ENCODE measurements at regions of chr2 and their contacts with region 1.

Region 1: GRCh38 chr2:229133155-229133772 is 137.8 kb downstream of the PID1 start:
- DNase-seq: peak in 1 of 10 donors; percentile 18
- H3K4me3 ChIP-seq: no peak overlapping the region
- H3K27ac ChIP-seq: no peak overlapping the region
- H3K27me3 ChIP-seq: no peaks in the 10 kb centered on the region
- CTCF ChIP-seq: peak in 55 of 56 donors; percentile 16 to 78 (median 57)

Region 2: GRCh38 chr2:229273723-229274338 is 140.6 kb after region 1 on chr2:
- intact Hi-C with region 1: loop called (anchors 5 to 10 kb)
- DNase-seq: peak in 4 of 10 donors; percentile 25 to 59 (median 42)
- H3K4me3 ChIP-seq: peak overlapping the region; percentile 3 to 60 (median 40)
- H3K27ac ChIP-seq: peak overlapping the region in 3 of 59 donors; percentile 26 to 39 (median 33)
- H3K27me3 ChIP-seq: no peaks in the 10 kb centered on the region
- CTCF ChIP-seq: peak; percentile 55 to 90 (median 80)

Region 3: GRCh38 chr2:229422063-229422462 is 288.8 kb after region 1 on chr2:
- intact Hi-C with region 1: no loop called
- DNase-seq: no peak
- H3K4me3 ChIP-seq: peak overlapping the region in 8 of 59 donors; percentile 1 to 31 (median 8)
- H3K27ac ChIP-seq: peak overlapping the region in 14 of 59 donors; percentile 0 to 49 (median 26)
- H3K27me3 ChIP-seq: no peaks in the 10 kb centered on the region
- CTCF ChIP-seq: no peak